ENCODE measurements at regions of chr10 and their contacts with region 1.

Region 1: DNA sequence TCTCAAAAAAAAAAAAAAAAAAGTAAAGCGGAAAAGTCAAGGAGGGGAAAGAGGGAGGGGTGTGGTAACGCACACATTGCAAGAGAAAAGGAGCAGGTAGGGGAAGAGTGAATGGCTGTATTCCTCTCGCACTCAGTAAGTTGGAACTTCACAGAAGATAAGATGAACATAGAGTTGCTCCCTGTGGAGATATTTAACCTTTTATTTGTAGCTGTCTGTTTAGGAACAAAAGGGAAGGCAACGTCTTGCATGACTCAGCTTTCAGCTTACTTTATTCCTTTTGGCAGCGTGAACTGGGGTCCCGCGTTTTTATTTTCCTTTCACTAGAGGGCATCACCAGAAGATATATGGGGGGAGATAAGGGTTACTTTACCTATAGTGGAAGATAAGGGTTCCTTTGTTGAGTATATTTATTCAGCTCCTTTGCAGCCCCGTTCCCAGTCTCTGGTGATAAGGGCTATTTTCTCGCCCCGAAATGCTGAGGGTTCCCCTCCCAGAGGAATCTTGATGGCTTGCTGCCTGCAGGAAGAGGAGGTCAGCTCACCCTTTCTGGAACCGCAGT is 78.5 kb downstream of the APBB1IP start:
- DNase-seq: peak; percentile 87 to 92
- H3K4me3 ChIP-seq: peak overlapping the region; percentile 16
- H3K4me3 Mint-ChIP-seq: peak overlapping the region; percentile 69
- H3K27ac Mint-ChIP-seq: peak overlapping the region; percentile 95
- H3K4me1 ChIP-seq: peaks cover 32% of the 10 kb centered on the region
- H3K4me1 Mint-ChIP-seq: peaks cover 33% of the 10 kb centered on the region
- H3K27me3 ChIP-seq: no peaks in the 10 kb centered on the region
- H3K27me3 Mint-ChIP-seq: no peaks in the 10 kb centered on the region
- CTCF ChIP-seq: peak in 1 of 2 experiments; percentile 47

Region 2: DNA sequence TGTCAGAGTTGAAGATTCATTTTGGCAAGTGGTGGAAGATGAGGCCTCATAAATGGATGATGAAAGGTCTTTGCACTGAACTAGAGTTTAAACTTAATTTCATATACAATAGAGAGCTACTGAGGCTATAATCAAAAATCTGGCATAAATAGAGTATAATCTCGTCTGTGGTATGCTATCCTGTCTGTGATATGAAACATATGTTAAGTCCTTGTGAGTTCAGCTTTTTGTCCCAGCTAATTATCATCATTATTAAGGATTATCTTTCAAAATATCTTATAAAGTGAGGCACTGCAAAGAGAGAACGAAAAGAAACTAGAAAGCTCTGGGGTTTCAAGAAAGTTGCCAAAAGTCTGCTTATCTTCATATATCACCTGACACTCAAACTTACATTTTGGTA is 216.6 kb before region 1 on chr10:
- CTCF ChIA-PET with region 1: no interaction called
- POLR2A ChIA-PET with region 1: no interaction called
- intact Hi-C with region 1: no loop called
- DNase-seq: no peak
- H3K4me3 ChIP-seq: no peak overlapping the region
- H3K4me3 Mint-ChIP-seq: no peak overlapping the region
- H3K27ac Mint-ChIP-seq: no peak overlapping the region
- H3K4me1 ChIP-seq: no peaks in the 10 kb centered on the region
- H3K4me1 Mint-ChIP-seq: no peaks in the 10 kb centered on the region
- H3K27me3 ChIP-seq: no peaks in the 10 kb centered on the region
- H3K27me3 Mint-ChIP-seq: peaks cover 7% of the 10 kb centered on the region
- CTCF ChIP-seq: no peak

Region 3: DNA sequence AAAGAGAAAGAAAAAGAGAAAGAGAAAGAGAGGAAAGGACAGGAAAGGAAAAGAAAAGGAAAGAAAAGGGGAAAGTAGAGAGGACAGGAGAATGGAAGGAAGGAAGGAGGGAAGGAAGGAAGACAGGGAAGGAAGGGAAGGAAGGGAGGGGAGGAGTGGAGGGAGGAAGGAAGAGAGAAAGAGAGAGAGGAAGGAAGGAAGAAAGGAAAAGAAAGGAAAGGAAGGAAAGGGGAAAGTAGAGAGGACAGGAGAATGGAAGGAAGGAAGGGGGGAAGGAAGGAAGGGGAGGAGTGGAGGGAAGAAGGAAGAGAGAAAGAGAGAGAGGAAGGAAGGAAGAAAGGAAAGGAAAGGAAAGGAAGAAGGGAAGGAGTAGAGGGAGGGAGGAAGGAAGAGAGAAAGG is 174.9 kb before region 1 on chr10:
- CTCF ChIA-PET with region 1: no interaction called
- POLR2A ChIA-PET with region 1: no interaction called
- intact Hi-C with region 1: no loop called
- DNase-seq: no peak
- H3K4me3 ChIP-seq: no peak overlapping the region
- H3K4me3 Mint-ChIP-seq: no peak overlapping the region
- H3K27ac Mint-ChIP-seq: no peak overlapping the region
- H3K4me1 ChIP-seq: peaks cover 2% of the 10 kb centered on the region
- H3K4me1 Mint-ChIP-seq: peaks cover 11% of the 10 kb centered on the region
- H3K27me3 ChIP-seq: no peaks in the 10 kb centered on the region
- H3K27me3 Mint-ChIP-seq: no peaks in the 10 kb centered on the region
- CTCF ChIP-seq: no peak

Region 4: GRCh38 chr10:26457088-26457487 is 59.5 kb before region 1 on chr10:
- CTCF ChIA-PET with region 1: no interaction called
- POLR2A ChIA-PET with region 1: no interaction called
- intact Hi-C with region 1: loop called (anchors 1 kb)
- DNase-seq: no peak
- H3K4me3 ChIP-seq: no peak overlapping the region
- H3K4me3 Mint-ChIP-seq: no peak overlapping the region
- H3K27ac Mint-ChIP-seq: peak overlapping the region; percentile 48
- H3K4me1 ChIP-seq: peaks cover 16% of the 10 kb centered on the region
- H3K4me1 Mint-ChIP-seq: peaks cover 36% of the 10 kb centered on the region
- H3K27me3 ChIP-seq: no peaks in the 10 kb centered on the region
- H3K27me3 Mint-ChIP-seq: no peaks in the 10 kb centered on the region
- CTCF ChIP-seq: no peak

Measured in Caco-2 (cell line).